GM10248 (cell line): ENCODE measurements at regions of chr12 and their contacts with region 1.

Region 1: DNA sequence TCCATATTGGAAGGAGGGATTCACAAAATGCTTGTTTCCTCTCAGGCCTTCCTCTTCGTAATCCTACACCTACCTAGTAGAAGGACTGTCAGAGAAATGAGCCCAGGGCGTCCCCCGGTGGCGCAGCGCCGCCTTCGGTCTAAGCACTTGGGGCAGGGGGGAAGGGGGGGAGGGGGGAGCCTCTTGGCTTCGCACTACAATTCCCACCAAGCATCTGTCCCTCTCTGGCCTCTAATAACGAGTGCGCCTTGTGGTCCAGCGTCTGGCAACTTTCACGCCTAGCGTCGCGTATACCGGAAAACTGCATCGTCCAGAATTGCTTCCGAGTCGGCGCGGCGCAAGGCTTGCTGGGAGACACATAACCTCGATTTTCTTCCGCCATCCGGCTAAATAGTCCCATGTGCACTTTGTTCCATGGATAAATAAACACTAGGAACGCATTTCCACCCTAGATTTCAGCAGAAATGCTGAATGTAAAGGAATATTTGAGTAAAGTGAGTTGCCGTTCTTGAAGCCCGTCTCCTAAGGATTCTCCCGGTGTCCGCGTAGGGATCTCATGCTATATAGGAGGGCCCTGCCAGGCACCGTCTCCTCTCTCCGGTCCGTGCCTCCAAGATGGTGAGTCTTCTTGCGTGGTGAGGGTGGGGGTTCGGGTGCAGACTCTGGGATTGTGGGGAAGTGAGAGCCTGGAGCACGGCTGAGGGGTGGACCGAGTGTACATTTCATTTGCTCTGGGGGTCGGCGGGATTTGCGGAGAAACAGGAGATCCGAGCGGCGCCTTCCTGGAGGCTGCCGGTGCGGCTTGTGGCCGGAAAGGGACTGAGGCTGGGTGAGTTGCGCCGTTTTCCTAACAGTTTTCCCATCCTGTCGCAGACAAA is at the start of gene RPS26:
- DNase-seq: peak; percentile 90
- CTCF ChIP-seq: peak; percentile 67

Region 2: DNA sequence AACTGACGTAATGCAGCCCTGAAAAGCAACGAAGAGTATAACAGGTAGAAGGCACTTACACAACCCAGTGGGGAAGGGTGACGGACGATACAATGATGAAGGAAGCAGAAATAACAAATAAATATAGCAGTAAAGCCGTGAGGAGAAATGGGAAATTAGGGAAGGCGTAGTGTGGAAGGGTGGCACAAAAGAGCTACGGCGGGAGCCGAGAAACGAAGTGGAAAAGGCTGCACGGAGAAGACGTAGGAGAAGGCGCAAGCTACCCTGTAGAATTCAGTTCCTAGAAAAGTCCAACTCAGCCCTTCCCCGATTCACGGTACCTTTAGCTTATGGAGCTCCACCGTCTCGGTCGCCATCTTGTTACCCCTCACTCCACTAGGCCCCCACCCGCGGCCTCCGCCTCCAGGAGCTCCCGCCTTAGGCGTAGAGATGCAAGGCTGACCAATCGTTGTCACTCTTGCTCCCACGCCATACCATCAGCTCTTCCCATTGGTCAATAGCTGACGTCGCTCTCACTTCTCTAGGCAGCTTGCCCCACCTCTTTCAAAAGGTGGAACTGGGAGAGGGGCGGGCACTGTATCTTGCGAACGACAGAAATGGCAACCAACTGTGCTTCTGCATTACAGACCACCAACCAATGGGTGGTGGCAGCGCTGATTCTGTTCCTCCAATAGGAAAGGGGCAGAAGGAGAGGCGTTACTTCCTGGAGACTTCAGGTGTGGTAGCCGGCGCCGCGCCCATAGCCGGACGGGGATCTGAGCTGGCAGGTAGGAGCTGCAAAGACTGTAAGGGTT is 224.2 kb before region 1 on chr12 and contains the starts of genes ORMDL2 and SARNP:
- CTCF ChIA-PET with region 1: interaction called, 12 read pairs
- POLR2A ChIA-PET with region 1: interaction called, 4 read pairs
- DNase-seq: peak; percentile 97
- CTCF ChIP-seq: no peak

Region 3: GRCh38 chr12:56007564-56008559 is 33.9 kb before region 1 on chr12:
- CTCF ChIA-PET with region 1: interaction called, 12 read pairs
- POLR2A ChIA-PET with region 1: no interaction called
- DNase-seq: peak; percentile 84
- CTCF ChIP-seq: no peak

Region 4: GRCh38 chr12:56029666-56030293 is 12.0 kb before region 1 on chr12:
- CTCF ChIA-PET with region 1: interaction called, 18 read pairs
- POLR2A ChIA-PET with region 1: no interaction called
- DNase-seq: peak; percentile 64
- CTCF ChIP-seq: peak; percentile 68

Region 5: DNA sequence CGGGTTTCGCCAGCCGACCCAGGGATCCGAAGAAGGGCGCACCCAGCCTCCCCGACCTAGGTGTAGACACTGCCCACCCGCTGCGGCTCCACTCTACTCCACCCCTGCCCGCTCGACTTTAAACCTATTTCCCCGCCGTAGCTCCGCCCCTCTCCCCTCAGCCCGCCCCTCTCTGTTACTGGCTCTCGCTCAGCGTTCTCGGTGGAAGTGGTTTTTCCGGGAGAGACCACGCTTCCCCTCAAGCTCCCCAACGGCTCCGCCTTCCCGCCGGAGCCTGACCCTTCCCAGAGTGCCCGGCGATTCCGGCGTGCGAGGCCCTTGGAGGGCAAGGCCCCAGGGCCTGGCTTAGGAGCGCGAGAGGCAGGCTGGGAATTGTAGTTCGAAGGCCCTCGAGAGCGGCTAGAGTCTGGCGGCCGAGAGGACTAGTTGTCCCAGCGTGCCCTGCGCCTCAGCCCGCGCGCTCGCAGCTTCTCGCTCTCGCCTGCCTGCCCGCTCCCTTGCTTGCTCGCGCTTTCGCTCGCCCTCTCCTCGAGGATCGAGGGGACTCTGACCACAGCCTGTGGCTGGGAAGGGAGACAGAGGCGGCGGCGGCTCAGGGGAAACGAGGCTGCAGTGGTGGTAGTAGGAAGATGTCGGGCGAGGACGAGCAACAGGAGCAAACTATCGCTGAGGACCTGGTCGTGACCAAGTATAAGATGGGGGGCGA is 62.5 kb after region 1 on chr12 and contains the start of gene PA2G4:
- CTCF ChIA-PET with region 1: interaction called, 13 read pairs
- POLR2A ChIA-PET with region 1: interaction called, 4 read pairs
- DNase-seq: peak; percentile 97
- CTCF ChIP-seq: no peak

Region 6: GRCh38 chr12:56117778-56118687 is 76.2 kb after region 1 on chr12 and contains the start of gene ZC3H10:
- CTCF ChIA-PET with region 1: interaction called, 5 read pairs
- POLR2A ChIA-PET with region 1: interaction called, 10 read pairs
- DNase-seq: peak; percentile 93
- CTCF ChIP-seq: peak; percentile 62

Region 7: DNA sequence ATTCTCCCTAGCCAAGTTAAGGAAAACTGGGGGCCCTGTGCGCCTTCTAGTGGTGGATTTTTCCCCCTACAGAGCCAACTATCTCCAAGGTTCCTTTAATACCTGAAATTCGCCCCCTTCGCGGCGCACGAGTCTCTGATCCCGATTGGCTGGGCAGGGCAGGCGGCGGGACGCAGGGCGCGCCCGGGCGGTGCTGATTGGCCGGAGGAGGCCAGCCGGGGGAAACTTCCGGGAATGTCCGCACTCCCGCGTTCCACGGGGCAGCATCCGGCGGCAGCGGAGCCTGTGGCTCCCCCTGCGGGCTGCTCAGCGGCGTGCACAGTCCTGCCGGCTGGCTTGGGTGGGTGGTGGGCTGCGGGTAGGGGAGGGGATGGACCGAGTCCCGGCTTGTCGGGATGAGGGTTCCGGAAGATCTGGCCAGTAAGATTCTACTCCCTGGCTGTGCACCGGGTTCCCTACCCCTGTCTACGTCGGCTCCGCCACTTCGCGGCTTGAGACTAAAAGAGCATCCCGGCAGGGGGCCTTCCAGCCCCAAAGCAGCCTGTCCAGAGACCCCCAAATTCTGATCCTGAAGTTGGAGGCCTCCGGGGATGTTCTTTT is 182.4 kb after region 1 on chr12 and contains the start of gene NABP2:
- CTCF ChIA-PET with region 1: interaction called, 11 read pairs
- POLR2A ChIA-PET with region 1: no interaction called
- DNase-seq: peak; percentile 99
- CTCF ChIP-seq: peak; percentile 90